Activated T-helper 1 cell treated with anti-CD3 and anti-CD28 coated beads, Interleukin-12 subunit alpha, Interleukin-12 subunit beta, Interleukin-2, Interleukin-4 antibody, amounts not matched to agents 30 ng/mL and 10 ng/mL and 1 ng/mL, durations not matched to agents 14 hours and 24 hours and 36 hours (primary cell): ENCODE measurements at regions of chr16 and their contacts with region 1.

Region 1: GRCh38 chr16:19067349-19068236 is at the start of gene COQ7:
- DNase-seq: peak; percentile 97
- H3K4me3 Mint-ChIP-seq: peak within 1 kb of the TSS; percentile 84
- H3K27ac Mint-ChIP-seq: peak within 1 kb of the TSS; percentile 98
- H3K4me1 Mint-ChIP-seq: peaks cover 21% of the 10 kb centered on the region
- H3K27me3 Mint-ChIP-seq: peaks cover 1% of the 10 kb centered on the region
- total RNA-seq, gene COQ7: 17.3 and 19.6 TPM in 2 replicates

Region 2: GRCh38 chr16:18801197-18801972 is 266.2 kb before region 1 on chr16 and contains the start of gene ARL6IP1:
- intact Hi-C with region 1: loop called (anchors 1 kb)
- DNase-seq: peak; percentile 98
- H3K4me3 Mint-ChIP-seq: peak within 1 kb of the TSS; percentile 95
- H3K27ac Mint-ChIP-seq: peak within 1 kb of the TSS; percentile 97
- H3K4me1 Mint-ChIP-seq: peaks cover 71% of the 10 kb centered on the region
- H3K27me3 Mint-ChIP-seq: no peaks in the 10 kb centered on the region
- total RNA-seq, gene ARL6IP1: 105 and 109 TPM in 2 replicates

Region 3: GRCh38 chr16:19086322-19087199 is 19.0 kb after region 1 on chr16:
- intact Hi-C with region 1: loop called (anchors 1 kb)
- DNase-seq: peak; percentile 75
- H3K4me3 Mint-ChIP-seq: peak overlapping the region; percentile 54
- H3K27ac Mint-ChIP-seq: no peak overlapping the region
- H3K4me1 Mint-ChIP-seq: no peaks in the 10 kb centered on the region
- H3K27me3 Mint-ChIP-seq: peaks cover 7% of the 10 kb centered on the region

Region 4: GRCh38 chr16:19294156-19294649 is 226.6 kb after region 1 on chr16:
- intact Hi-C with region 1: loop called (anchors 1 kb)
- DNase-seq: peak; percentile 3
- H3K4me3 Mint-ChIP-seq: peak overlapping the region; percentile 37
- H3K27ac Mint-ChIP-seq: peak overlapping the region; percentile 82
- H3K4me1 Mint-ChIP-seq: peaks cover 16% of the 10 kb centered on the region
- H3K27me3 Mint-ChIP-seq: peaks cover 3% of the 10 kb centered on the region

Region 5: GRCh38 chr16:19555162-19555937 is 487.8 kb after region 1 on chr16 and contains the start of gene VPS35L:
- intact Hi-C with region 1: loop called (anchors 1 kb)
- DNase-seq: peak; percentile 93
- H3K4me3 Mint-ChIP-seq: peak within 1 kb of the TSS; percentile 93
- H3K27ac Mint-ChIP-seq: peak within 1 kb of the TSS; percentile 93
- H3K4me1 Mint-ChIP-seq: peaks cover 14% of the 10 kb centered on the region
- H3K27me3 Mint-ChIP-seq: no peaks in the 10 kb centered on the region
- total RNA-seq, gene VPS35L: 36.2 and 37.4 TPM in 2 replicates

Region 6: DNA sequence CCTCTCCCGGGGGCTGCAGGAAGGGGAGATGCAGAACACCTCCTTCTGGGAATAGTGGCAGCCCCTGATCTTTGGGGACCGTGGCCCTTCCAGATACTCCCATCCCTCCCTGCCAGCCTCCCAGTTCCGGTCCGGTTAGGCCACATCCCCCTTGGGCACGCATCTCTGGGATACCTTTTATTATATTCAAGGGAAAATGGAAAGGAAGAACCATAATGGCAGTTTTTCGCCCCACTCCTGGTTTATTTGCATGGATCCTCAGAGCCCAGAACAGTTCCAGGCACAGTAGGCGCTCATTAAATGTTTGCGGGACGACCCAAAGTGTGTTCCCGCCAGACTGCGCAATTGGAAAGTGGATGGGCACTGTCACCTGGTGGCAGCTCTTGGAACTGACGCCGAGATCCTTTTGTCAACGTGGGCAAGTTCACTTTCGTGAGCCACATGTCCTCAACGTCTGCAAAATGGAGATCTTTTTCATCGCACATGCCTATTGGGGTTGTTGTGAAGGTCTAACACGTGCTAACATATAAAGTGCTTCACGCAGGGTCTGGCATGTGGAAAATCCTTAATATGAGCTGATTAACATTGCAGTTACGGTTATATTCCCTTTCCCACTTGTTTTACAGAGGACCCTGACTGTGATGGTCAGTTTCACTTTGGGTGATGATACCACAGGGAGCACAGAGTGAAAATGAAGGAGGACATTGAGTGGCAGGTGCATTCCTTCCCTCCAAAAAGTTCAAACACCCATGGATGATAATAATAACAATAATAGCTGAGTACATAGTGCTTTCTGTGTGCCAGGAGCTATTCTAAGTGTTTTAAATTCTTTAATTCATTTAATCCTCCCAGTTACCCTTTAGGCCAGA is 818.7 kb after region 1 on chr16:
- intact Hi-C with region 1: loop called (anchors 2 kb)
- DNase-seq: peak; percentile 71
- H3K4me3 Mint-ChIP-seq: peak overlapping the region; percentile 73
- H3K27ac Mint-ChIP-seq: peak overlapping the region; percentile 50
- H3K4me1 Mint-ChIP-seq: peaks cover 16% of the 10 kb centered on the region
- H3K27me3 Mint-ChIP-seq: peaks cover 34% of the 10 kb centered on the region